ENCODE measurements at regions of chr10 and their contacts with region 1.

Region 1: GRCh38 chr10:77710759-77711682 is 73.4 kb upstream of the KCNMA1 start:
- DNase-seq: peak; percentile 77
- H3K27ac ChIP-seq: no peak overlapping the region; the same call in 1 of the 2 replicates
- CTCF ChIP-seq: peak; percentile 99

Region 2: DNA sequence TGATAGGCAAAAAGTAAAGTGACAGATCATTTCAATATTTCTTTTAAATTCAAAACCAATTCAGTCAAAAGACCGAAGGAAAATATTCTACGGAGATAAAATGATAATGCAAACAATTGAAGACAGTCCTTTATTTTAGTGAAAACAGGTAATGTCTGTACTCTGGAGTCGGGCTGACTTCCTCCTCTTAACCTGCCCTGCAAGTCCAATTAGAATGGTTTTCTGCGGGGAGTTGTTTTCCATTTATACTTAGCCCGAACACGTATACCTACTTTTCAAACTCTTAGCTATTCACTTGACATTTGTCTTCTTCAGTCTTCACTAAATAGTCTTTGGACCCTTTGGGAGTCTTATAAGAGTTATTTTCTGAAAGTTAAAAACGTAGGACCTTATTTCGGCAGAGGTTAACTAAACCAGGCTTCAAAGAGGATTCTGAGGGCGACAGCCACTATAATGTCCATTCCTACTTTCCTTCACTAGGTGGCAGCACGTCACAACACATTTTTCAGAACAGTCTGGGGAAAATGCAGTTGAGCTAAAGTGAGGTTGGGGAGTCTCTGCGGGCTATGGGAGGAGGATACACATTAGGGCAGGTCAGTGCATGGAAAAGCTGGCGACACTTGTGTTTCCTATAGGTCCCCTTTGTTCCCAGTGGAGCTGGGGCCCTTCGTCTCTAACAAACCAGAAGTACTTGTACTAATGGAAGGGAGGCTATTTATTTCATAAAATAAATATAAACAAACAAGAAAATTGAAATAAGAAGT is 545.4 kb before region 1 on chr10:
- CTCF ChIA-PET with region 1: interaction called, 28 read pairs
- POLR2A ChIA-PET with region 1: no interaction called
- DNase-seq: peak; percentile 57
- H3K27ac ChIP-seq: no peak overlapping the region
- CTCF ChIP-seq: peak; percentile 80

Region 3: DNA sequence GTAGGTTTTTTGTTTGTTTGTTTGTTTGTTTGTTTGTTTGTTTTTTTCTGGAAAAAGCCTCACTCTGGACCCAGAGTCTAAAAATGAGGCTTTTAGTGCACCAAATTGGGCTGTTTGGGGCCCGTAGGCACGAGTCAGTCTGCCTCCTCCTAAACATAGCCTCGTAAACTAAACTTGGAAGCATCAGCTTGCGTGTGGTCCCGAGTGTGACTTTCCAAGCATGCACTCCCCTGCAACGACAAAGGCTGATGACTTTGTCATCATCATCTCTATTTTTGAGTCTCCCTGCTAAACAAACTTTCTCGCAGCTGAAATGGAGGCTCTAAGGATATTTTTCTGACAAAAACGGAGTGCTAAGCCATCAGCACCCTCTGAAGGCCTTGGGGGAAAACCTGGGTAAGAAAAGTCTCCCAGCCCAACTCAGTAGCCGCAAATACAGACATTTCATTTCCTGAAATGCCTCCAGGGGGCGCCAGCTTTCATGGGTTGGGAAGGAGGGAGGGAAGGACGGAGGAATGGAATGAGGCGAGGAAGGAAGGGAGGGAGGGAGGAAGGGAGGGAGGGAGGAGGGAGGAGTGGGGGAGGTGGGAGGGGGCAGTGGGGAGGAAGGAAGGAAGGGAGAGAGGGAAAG is 319.3 kb before region 1 on chr10:
- CTCF ChIA-PET with region 1: interaction called, 12 read pairs
- POLR2A ChIA-PET with region 1: no interaction called
- DNase-seq: peak; percentile 70
- H3K27ac ChIP-seq: peak overlapping the region; percentile 96
- CTCF ChIP-seq: peak; percentile 70

Region 4: DNA sequence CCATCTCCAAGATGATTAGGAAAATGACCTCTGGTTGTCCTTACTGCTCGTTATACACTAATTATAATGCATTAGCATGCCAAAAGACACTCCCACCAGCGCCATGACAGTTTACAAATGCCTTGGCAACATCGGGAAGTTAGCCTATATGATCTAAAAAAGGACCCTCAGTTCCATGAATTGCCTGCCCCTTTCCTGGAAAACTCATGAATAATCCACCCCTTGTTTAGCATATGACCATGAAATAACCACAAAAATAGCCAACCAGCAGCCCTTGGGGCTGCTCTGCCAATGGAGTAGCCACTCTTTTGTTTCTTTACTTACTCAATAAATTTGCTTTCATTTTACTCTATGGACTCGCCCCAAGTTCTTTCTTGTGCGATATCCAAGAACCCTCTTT is 31.8 kb before region 1 on chr10:
- CTCF ChIA-PET with region 1: interaction called, 10 read pairs
- POLR2A ChIA-PET with region 1: no interaction called
- DNase-seq: no peak
- H3K27ac ChIP-seq: no peak overlapping the region
- CTCF ChIP-seq: no peak

Region 5: DNA sequence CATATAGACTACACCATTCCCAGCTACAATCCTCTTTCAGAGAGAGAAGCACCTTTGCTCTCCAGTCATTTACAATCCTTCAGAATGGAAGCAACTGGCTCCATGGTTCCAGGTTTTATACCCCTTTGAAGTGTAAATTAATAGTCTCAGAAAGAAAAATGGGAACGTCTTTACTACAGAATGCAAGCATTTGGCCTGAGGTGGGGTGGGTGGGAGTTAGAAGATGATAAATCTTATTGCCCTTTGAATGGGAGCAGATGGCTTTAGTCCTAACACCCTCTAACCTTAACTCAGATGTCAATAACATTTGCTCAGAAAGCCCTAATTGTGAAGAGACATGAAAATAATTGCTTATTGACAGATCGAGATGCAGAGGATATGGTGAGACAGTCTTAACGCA is 10.8 kb after region 1 on chr10:
- CTCF ChIA-PET with region 1: interaction called, 20 read pairs
- POLR2A ChIA-PET with region 1: no interaction called
- DNase-seq: no peak
- H3K27ac ChIP-seq: no peak overlapping the region
- CTCF ChIP-seq: no peak

Measured in RWPE1 (cell line).